CD4-positive, alpha-beta memory T cell (primary cell): ENCODE measurements at regions of chr18 and their contacts with region 1.

Region 1: GRCh38 chr18:63186520-63187222 is 132.9 kb downstream of the BCL2 start:
- DNase-seq: no peak
- H3K4me3 ChIP-seq: no peak overlapping the region
- H3K4me3 Mint-ChIP-seq: peak overlapping the region in 4 of 8 donors; percentile 1 to 68 (median 4)
- H3K27ac ChIP-seq: peak overlapping the region; percentile 1
- H3K27ac Mint-ChIP-seq: peak overlapping the region in 6 of 7 donors; percentile 3 to 88 (median 32)
- H3K4me1 ChIP-seq: peaks cover 63% of the 10 kb centered on the region
- H3K4me1 Mint-ChIP-seq: peaks cover 53 to 87% (median 69%) of the 10 kb centered on the region in 4 donors
- H3K27me3 ChIP-seq: no peaks in the 10 kb centered on the region
- H3K27me3 Mint-ChIP-seq: no peaks in the 10 kb centered on the region

Region 2: GRCh38 chr18:63169853-63170252 is 16.8 kb before region 1 on chr18:
- CTCF ChIA-PET with region 1: interaction called, 5 read pairs
- POLR2A ChIA-PET with region 1: interaction called, 3 read pairs
- intact Hi-C with region 1: loop called (anchors 2 kb)
- DNase-seq: no peak
- H3K4me3 ChIP-seq: no peak overlapping the region
- H3K4me3 Mint-ChIP-seq: no peak overlapping the region
- H3K27ac ChIP-seq: no peak overlapping the region
- H3K27ac Mint-ChIP-seq: peak overlapping the region in 5 of 7 donors; percentile 4 to 41 (median 15)
- H3K4me1 ChIP-seq: peaks cover 35% of the 10 kb centered on the region
- H3K4me1 Mint-ChIP-seq: peaks cover 39 to 66% (median 47%) of the 10 kb centered on the region in 4 donors
- H3K27me3 ChIP-seq: no peaks in the 10 kb centered on the region
- H3K27me3 Mint-ChIP-seq: no peaks in the 10 kb centered on the region

Region 3: DNA sequence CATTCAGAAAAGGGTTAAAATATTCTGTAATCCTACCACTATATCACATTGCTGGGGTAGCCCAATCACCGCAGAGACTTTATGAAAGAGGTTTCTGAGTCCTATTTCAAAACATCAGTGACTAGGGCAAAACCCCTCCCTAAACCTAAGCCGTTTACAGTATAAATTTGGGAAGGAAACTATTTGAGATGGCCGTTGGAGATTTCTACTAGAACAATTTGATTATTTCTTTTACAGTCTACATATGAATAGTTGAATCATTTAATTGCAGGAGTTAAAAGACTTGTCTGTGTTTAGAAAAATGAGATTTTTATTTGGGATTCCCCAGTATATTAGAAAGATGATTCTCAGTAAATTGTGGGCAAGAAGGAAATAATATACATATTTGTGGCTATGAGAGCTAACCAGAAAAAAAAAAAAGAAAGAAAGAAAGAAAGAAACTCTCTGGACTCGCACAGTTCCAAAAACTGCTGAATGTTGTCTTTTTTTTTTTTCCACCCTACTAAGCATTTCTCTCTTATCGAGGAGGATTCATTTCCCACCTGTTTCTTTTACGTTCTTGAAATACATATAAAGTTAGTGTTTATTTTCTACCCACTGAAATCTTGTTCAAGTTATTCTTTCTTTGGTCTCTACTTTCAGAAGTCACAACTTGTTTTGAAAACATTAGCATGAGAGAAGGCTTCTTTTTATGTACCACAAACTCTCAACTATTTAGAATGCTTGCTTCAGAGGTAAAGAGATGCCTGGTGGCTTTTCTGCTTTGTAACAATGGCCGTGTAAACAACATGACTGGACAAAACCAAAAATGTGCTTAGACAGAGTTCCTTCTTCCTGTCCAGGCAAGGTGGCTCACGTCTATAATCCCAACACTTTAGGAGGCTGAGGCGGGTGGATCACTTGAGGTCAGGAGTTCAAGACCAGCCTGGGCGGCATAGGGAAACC is 67.0 kb after region 1 on chr18:
- CTCF ChIA-PET with region 1: no interaction called
- POLR2A ChIA-PET with region 1: no interaction called
- intact Hi-C with region 1: no loop called
- DNase-seq: no peak
- H3K4me3 ChIP-seq: no peak overlapping the region
- H3K4me3 Mint-ChIP-seq: peak overlapping the region in 7 of 8 donors; percentile 3 to 83 (median 66)
- H3K27ac ChIP-seq: peak overlapping the region; percentile 4
- H3K27ac Mint-ChIP-seq: peak overlapping the region; percentile 37 to 83 (median 79)
- H3K4me1 ChIP-seq: peaks cover 77% of the 10 kb centered on the region
- H3K4me1 Mint-ChIP-seq: peaks cover 56 to 87% (median 68%) of the 10 kb centered on the region in 4 donors
- H3K27me3 ChIP-seq: no peaks in the 10 kb centered on the region
- H3K27me3 Mint-ChIP-seq: no peaks in the 10 kb centered on the region

Region 4: GRCh38 chr18:63284827-63285733 is 98.4 kb after region 1 on chr18:
- CTCF ChIA-PET with region 1: no interaction called
- POLR2A ChIA-PET with region 1: no interaction called
- intact Hi-C with region 1: no loop called
- DNase-seq: no peak
- H3K4me3 ChIP-seq: no peak overlapping the region
- H3K4me3 Mint-ChIP-seq: peak overlapping the region in 5 of 8 donors; percentile 10 to 73 (median 43)
- H3K27ac ChIP-seq: no peak overlapping the region
- H3K27ac Mint-ChIP-seq: peak overlapping the region in 4 of 7 donors; percentile 16 to 53 (median 30)
- H3K4me1 ChIP-seq: peaks cover 73% of the 10 kb centered on the region
- H3K4me1 Mint-ChIP-seq: peaks cover 20 to 45% (median 32%) of the 10 kb centered on the region in 4 donors
- H3K27me3 ChIP-seq: no peaks in the 10 kb centered on the region
- H3K27me3 Mint-ChIP-seq: no peaks in the 10 kb centered on the region